PC-9 (cell line): ENCODE measurements at regions of chr21 and their contacts with region 1.

Region 1: GRCh38 chr21:26170471-26171257 is at the start of gene APP:
- DNase-seq: peak; percentile 51 to 84
- H3K4me3 ChIP-seq: peak within 1 kb of the TSS; percentile 92
- H3K27ac ChIP-seq: peak within 1 kb of the TSS; percentile 43
- H3K4me1 ChIP-seq: peaks cover 33% of the 10 kb centered on the region
- H3K27me3 ChIP-seq: no peaks in the 10 kb centered on the region
- CTCF ChIP-seq: peak; percentile 63; the same call in 1 of the 2 replicates
- total RNA-seq, gene APP: 224 and 269 TPM in 2 replicates

Region 2: DNA sequence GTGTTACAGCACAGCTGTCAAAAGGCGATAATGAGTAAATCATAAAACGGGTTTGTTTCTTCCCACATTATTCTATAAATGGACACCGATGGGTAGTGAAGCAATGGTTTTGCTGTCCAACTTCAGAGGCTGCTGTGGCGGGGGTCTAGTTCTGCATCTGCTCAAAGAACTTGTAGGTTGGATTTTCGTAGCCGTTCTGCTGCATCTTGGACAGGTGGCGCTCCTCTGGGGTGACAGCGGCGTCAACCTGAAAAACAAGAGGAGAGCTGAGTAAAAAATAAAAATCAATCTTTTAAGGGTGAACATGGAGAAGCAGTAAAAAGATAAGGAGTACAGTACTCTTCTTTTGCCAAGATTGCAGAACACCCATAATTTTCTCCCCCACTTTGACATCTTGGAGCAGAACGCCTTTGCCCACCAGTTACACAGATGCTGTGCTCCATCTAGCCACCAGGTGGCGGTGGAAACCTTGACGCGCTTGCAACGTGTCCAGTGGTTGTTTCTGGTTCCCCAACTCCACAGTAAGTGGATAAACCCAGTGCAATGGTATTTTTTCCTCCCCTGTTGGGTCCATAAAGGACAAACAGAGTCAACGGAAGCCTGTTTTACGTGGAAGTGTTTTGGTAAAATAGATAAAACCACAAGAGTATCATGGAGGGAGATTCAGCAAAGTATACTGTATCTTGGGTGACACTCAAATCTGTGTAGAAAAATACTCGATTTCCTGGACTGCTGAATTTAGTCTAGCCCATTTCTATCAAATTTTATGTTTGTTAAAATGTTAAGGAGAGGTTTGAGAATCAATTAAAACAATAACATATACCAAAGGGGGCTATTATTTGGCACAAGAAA is 288.9 kb before region 1 on chr21:
- CTCF ChIA-PET with region 1: no interaction called
- POLR2A ChIA-PET with region 1: no interaction called
- intact Hi-C with region 1: loop called (anchors 5 kb)
- DNase-seq: peak in 1 of 2 experiments; percentile 41
- H3K4me3 ChIP-seq: no peak overlapping the region
- H3K27ac ChIP-seq: no peak overlapping the region
- H3K4me1 ChIP-seq: no peaks in the 10 kb centered on the region
- H3K27me3 ChIP-seq: no peaks in the 10 kb centered on the region
- CTCF ChIP-seq: peak; percentile 83

Region 3: GRCh38 chr21:25895565-25896205 is 275.0 kb before region 1 on chr21:
- CTCF ChIA-PET with region 1: no interaction called
- POLR2A ChIA-PET with region 1: interaction called, 7 read pairs
- intact Hi-C with region 1: loop called (anchors 2 kb)
- DNase-seq: no peak
- H3K4me3 ChIP-seq: no peak overlapping the region
- H3K27ac ChIP-seq: no peak overlapping the region
- H3K4me1 ChIP-seq: no peaks in the 10 kb centered on the region
- H3K27me3 ChIP-seq: no peaks in the 10 kb centered on the region
- CTCF ChIP-seq: peak; percentile 47; the same call in 1 of the 2 replicates

Region 4: DNA sequence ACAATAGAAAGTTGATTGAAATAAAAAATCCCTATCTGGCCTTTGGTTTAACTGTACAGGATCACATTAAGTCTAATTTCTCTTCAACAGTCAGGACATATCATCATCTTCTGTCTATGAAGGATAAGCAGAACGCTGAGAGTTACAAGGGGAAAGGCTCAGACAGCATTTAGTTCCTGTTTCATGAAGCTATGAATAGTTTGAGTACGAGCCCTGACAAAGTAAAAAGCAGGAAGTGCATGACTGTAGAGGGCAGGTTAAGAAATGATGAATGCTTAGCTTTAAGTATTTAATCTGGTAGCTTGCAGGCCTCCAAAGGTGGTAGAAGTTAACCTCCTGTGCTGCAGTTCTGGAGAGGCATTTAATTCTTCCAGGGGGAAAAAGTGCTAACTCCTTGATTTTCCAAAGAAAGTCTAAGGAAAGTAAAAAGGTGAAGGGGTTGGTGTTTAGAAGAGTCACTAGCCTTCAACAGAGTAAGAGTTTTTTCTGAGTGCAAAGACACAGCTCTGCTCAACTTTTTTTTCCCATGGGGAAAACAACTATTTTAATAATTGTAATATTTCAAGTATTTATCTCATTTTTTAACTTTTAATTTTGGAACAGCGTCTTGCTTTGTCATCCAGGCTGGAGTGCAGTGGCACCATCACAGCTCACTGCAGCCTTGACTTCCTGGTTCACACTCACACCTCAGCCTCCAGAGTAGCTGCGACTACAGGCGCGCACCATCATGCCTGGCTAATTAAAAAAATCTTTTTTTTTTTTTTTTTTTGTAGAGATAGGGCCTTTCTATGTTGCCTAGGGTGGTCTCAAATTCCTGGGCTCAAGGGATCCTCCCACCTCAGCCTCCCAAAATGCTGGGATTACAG is 202.9 kb before region 1 on chr21:
- CTCF ChIA-PET with region 1: no interaction called
- POLR2A ChIA-PET with region 1: no interaction called
- intact Hi-C with region 1: loop called (anchors 1 kb)
- DNase-seq: no peak
- H3K4me3 ChIP-seq: no peak overlapping the region
- H3K27ac ChIP-seq: no peak overlapping the region
- H3K4me1 ChIP-seq: peaks cover 14% of the 10 kb centered on the region
- H3K27me3 ChIP-seq: no peaks in the 10 kb centered on the region
- CTCF ChIP-seq: no peak

Region 5: GRCh38 chr21:26116456-26117011 is 54.1 kb before region 1 on chr21:
- CTCF ChIA-PET with region 1: no interaction called
- POLR2A ChIA-PET with region 1: no interaction called
- intact Hi-C with region 1: loop called (anchors 5 kb)
- DNase-seq: peak; percentile 58 to 93
- H3K4me3 ChIP-seq: peak overlapping the region; percentile 12; the same call in 1 of the 2 replicates
- H3K27ac ChIP-seq: peak overlapping the region; percentile 85
- H3K4me1 ChIP-seq: peaks cover 37% of the 10 kb centered on the region
- H3K27me3 ChIP-seq: no peaks in the 10 kb centered on the region
- CTCF ChIP-seq: no peak

Region 6: DNA sequence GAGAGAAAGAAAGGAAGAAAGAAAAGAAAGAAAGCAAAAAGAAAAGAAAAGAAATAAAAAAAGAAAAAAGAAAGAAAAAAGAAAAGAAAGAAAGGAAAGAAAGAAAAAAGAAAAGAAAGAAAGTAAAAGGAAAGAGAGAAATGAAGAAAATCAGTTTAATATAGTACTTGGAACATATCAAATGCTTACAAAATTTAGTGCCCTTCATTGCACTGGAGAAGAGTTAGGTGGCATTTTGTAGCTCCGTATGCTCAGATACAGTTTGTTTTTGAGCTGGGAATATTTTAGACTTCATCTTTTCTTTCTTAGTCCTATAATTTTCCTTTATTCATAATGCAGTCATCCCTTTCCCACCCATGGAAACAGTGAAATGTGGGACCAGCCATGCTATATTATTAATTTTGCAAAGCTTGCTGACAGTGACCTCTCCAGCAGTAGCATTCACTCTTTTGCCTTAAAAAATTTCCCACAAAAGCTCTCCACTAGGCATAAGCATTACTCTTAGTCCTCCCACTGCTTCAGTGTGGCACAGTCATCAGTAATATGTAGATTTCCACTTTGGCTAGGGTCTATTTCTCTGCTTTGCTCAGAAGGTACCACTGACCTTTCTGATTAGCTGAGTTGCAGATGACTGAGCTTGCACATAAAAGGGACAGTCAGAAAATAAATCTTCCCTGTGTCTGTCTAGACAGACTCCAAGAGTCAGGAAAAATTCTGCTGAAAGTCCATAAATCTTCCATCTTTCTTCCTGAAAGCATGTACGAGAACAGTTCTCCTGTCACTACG is 56.3 kb after region 1 on chr21:
- CTCF ChIA-PET with region 1: no interaction called
- POLR2A ChIA-PET with region 1: no interaction called
- intact Hi-C with region 1: no loop called
- DNase-seq: no peak
- H3K4me3 ChIP-seq: no peak overlapping the region
- H3K27ac ChIP-seq: no peak overlapping the region
- H3K4me1 ChIP-seq: no peaks in the 10 kb centered on the region
- H3K27me3 ChIP-seq: no peaks in the 10 kb centered on the region
- CTCF ChIP-seq: no peak